ENCODE measurements at regions of chr17 and their contacts with region 1.

Region 1: DNA sequence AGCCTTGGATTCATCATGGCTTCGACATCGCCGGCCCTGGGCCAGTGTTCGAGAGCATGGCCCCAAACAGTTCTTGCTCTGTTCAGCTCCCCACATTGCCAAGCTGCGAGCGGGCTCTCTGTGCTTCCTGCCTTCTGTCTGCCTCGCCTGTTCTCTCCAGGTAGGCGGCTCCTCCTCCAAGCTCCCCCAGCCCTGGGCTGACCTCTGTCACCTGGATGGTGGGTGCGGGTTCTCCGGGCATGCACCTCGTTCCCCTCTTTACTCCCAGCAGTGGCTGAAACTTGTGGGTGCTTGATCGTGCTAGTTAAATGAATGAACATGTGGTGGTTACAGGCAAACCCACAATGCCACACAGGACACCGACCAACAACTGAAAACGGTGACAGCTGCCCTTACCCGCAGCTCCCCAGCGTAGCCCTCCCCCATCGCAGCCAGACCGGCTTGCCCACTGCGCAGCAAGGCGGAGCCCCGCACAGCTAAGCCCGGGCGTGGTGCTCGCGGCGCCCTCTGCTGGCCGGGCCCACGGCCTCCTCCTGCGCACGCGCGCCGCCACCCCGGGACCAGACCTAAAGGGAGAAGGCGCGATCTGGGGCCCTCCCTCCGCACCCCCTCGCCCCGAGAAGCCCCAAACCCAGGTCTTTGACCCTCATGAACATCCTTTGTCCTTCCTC is 23.0 kb upstream of the EIF1 start:
- H3K4me3 ChIP-seq: peak overlapping the region; percentile 25
- H3K27ac ChIP-seq: peak overlapping the region; percentile 45; the same call in 1 of the 2 replicates
- H3K4me1 ChIP-seq: peaks cover 3% of the 10 kb centered on the region
- CTCF ChIP-seq: peak; percentile 98

Region 2: DNA sequence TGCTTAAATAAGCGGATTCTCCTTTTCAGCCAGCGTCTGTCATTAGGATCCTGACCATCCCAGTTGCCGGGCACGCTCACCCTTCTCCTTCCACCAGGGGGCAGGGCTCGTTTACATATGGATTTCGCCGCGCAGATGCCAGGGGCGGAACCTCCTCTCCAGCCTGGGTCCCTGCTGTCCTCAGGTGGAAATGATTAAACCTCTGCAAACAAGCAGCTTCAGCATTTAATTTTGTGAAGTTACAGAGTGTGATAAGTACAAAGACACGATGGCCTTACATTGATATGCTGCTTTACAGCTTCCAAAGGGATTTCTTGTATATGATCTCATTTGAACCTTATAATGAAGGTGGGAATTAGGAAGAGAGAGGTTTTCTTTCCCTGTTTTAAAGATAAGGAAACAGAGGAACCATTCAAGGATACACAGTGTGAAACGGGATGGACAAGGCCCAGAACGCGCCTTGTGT is 862.1 kb before region 1 on chr17:
- CTCF ChIA-PET with region 1: interaction called, 68 read pairs
- POLR2A ChIA-PET with region 1: no interaction called
- H3K4me3 ChIP-seq: no peak overlapping the region
- H3K27ac ChIP-seq: no peak overlapping the region
- H3K4me1 ChIP-seq: no peaks in the 10 kb centered on the region
- CTCF ChIP-seq: peak; percentile 71; the same call in 1 of the 2 replicates

Region 3: GRCh38 chr17:40909351-40909750 is 756.4 kb before region 1 on chr17:
- CTCF ChIA-PET with region 1: interaction called, 42 read pairs
- POLR2A ChIA-PET with region 1: no interaction called
- H3K4me3 ChIP-seq: no peak overlapping the region
- H3K27ac ChIP-seq: no peak overlapping the region
- H3K4me1 ChIP-seq: peaks cover 6% of the 10 kb centered on the region; the same call in 1 of the 2 replicates
- CTCF ChIP-seq: peak; percentile 45; the same call in 1 of the 2 replicates

Region 4: DNA sequence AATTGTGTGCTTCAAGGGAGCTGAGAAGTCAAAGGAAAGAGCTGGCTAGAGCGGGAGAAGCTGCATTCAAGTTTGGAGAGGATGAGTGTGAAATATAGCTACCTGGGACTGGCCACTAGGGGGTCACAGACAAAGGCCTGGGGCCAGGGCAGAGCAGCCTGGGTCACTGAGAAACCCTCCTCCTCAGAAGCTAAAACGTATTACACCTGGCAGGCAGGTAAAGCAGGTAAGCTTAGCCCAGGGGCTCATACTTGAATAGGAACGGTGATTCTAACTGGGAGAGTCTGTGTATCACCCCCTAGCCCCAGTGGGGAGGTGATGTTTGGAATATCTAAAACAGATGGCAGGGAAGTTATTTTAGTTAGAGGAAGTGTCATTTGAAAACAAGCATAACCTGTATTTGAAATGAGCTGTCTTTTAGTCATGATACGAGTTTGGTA is 248.1 kb before region 1 on chr17:
- CTCF ChIA-PET with region 1: interaction called, 10 read pairs
- POLR2A ChIA-PET with region 1: no interaction called
- H3K4me3 ChIP-seq: no peak overlapping the region
- H3K27ac ChIP-seq: no peak overlapping the region
- H3K4me1 ChIP-seq: no peaks in the 10 kb centered on the region
- CTCF ChIP-seq: no peak

Region 5: DNA sequence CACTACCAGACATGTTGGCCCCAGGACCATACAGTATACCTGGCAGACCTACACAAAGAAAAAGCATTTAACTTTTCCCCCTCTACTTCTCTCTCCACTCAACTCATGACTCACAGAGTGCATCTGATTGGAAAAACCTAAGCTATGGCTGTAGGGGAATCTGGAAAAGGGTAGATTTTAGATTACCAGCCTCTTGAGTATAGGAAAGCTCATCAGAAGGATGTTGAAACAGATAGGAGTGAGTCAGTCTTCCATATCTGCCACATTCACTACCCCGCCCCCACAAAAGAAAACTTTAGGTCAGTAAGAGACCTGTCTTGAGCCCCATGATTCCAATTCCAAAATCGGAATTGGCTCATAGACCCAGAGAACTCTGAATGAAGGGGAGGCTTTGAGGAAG is 106.2 kb before region 1 on chr17:
- CTCF ChIA-PET with region 1: interaction called, 546 read pairs
- POLR2A ChIA-PET with region 1: no interaction called
- H3K4me3 ChIP-seq: no peak overlapping the region
- H3K27ac ChIP-seq: no peak overlapping the region
- H3K4me1 ChIP-seq: no peaks in the 10 kb centered on the region
- CTCF ChIP-seq: no peak

Region 6: GRCh38 chr17:41624208-41625101 is 41.2 kb before region 1 on chr17 and contains the start of gene KRT17:
- CTCF ChIA-PET with region 1: interaction called, 12 read pairs
- POLR2A ChIA-PET with region 1: interaction called, 3 read pairs
- H3K4me3 ChIP-seq: peak within 1 kb of the TSS; percentile 26
- H3K27ac ChIP-seq: no peak within 1 kb of the TSS
- H3K4me1 ChIP-seq: peaks cover 2% of the 10 kb centered on the region; the same call in 1 of the 2 replicates
- CTCF ChIP-seq: no peak

Region 7: DNA sequence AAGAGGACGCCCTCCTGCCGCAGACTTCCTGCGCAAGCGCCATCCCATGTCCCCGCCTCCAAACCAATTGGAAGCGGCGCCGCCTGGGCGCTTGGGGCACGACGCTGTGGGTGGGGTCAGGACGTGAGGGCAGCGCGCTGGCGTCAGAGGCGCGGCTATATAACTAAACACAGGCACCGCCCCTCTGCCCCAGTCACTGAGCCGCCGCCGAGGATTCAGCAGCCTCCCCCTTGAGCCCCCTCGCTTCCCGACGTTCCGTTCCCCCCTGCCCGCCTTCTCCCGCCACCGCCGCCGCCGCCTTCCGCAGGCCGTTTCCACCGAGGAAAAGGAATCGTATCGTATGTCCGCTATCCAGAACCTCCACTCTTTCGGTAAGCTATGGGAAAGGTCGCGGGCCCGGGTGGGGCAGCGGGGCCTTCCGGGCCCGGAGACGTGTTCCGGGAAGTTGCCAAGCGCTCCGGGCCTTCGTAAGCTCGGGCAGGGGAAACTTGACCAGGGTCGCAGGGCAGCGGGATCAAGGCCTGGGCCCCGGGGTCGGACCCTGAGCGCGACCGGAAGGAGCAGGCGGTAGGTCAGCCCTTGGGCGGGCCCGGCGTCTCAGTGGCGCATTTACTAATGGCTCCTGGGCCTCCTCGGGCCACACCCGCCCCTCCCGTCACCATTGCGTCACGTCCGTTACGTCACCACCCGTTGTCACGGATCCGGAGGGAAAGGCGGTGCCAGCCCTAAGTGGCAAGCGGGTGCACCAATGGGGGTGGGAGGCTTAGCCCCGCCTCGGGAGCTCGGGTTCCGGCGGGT is 23.2 kb after region 1 on chr17 and contains the start of gene EIF1:
- CTCF ChIA-PET with region 1: interaction called, 126 read pairs
- POLR2A ChIA-PET with region 1: interaction called, 53 read pairs
- H3K4me3 ChIP-seq: peak within 1 kb of the TSS; percentile 96
- H3K27ac ChIP-seq: peak within 1 kb of the TSS; percentile 89
- H3K4me1 ChIP-seq: no peaks in the 10 kb centered on the region
- CTCF ChIP-seq: 0 out of 2 replicates have a peak, but pooled peaks have one; percentile 17

Measured in HEK293 (cell line).